B cell (primary cell): ENCODE measurements at regions of chr16 and their contacts with region 1.

Region 1: GRCh38 chr16:70523076-70523742 is at the start of gene COG4:
- DNase-seq: peak; percentile 94
- ATAC-seq: peak; percentile 85
- H3K4me3 ChIP-seq: peak within 1 kb of the TSS; percentile 74 to 100 (median 87)
- H3K4me3 Mint-ChIP-seq: peak within 1 kb of the TSS; percentile 94
- H3K27ac ChIP-seq: peak within 1 kb of the TSS; percentile 85 to 92
- H3K27ac Mint-ChIP-seq: peak within 1 kb of the TSS; percentile 96
- H3K4me1 ChIP-seq: peaks cover 26 to 35% of the 10 kb centered on the region in 2 donors
- H3K4me1 Mint-ChIP-seq: peaks cover 44% of the 10 kb centered on the region
- H3K27me3 ChIP-seq: no peaks in the 10 kb centered on the region
- H3K27me3 Mint-ChIP-seq: no peaks in the 10 kb centered on the region
- CTCF ChIP-seq: no peak
- total RNA-seq, gene COG4: 55.9 and 60.6 TPM in 2 replicates

Region 2: GRCh38 chr16:69839798-69840409 is 683.3 kb before region 1 on chr16:
- CTCF ChIA-PET with region 1: no interaction called
- POLR2A ChIA-PET with region 1: no interaction called
- intact Hi-C with region 1: no loop called
- DNase-seq: no peak
- ATAC-seq: no peak
- H3K4me3 ChIP-seq: no peak overlapping the region
- H3K4me3 Mint-ChIP-seq: no peak overlapping the region
- H3K27ac ChIP-seq: no peak overlapping the region
- H3K27ac Mint-ChIP-seq: no peak overlapping the region
- H3K4me1 ChIP-seq: no peaks in the 10 kb centered on the region
- H3K4me1 Mint-ChIP-seq: no peaks in the 10 kb centered on the region
- H3K27me3 ChIP-seq: no peaks in the 10 kb centered on the region
- H3K27me3 Mint-ChIP-seq: no peaks in the 10 kb centered on the region
- CTCF ChIP-seq: no peak

Region 3: DNA sequence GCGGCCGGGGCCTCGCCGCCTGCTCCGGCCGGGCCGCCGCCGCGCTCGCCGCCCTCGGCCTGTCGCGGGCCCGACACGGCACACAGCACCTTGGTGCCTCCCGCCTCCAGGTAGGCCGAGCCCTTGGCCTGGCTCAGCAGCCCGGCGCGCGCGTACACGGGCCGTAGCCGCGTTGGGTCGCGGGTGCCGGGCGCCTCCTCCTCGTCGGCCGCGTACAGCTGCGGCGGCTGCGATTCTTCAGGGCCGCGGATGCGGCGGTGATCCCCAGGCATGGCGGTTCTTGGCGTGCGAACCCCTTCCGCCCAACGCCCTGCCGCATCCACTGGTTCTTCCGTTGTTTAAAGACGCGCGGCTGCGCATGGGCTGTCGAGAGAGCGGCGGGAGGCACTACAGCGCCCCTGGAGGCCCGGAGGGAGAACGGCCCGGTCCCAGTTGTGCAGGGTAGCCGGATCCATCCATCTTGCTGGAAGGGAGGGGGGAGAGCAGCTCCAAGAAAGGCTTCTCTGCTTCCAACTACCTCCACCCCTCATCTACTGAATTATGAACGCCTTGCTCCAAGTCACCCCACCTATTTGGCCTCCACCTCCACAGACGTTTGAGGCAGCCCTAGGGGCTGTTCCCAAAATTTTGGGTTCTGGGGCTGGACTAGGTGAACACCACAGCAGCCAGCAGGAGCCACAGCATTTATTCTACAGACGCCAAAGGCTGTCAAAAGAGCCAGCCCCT is 271.4 kb before region 1 on chr16 and contains the start of gene EXOSC6:
- CTCF ChIA-PET with region 1: interaction called, 3 read pairs
- POLR2A ChIA-PET with region 1: interaction called, 3 read pairs
- intact Hi-C with region 1: loop called (anchors 1 kb)
- DNase-seq: peak; percentile 96
- ATAC-seq: peak; percentile 97
- H3K4me3 ChIP-seq: peak within 1 kb of the TSS; percentile 19 to 76 (median 65)
- H3K4me3 Mint-ChIP-seq: peak within 1 kb of the TSS; percentile 90
- H3K27ac ChIP-seq: peak within 1 kb of the TSS; percentile 38 to 78
- H3K27ac Mint-ChIP-seq: peak within 1 kb of the TSS; percentile 98
- H3K4me1 ChIP-seq: peaks cover 0 to 24% of the 10 kb centered on the region in 2 donors
- H3K4me1 Mint-ChIP-seq: peaks cover 14% of the 10 kb centered on the region
- H3K27me3 ChIP-seq: no peaks in the 10 kb centered on the region
- H3K27me3 Mint-ChIP-seq: no peaks in the 10 kb centered on the region
- CTCF ChIP-seq: peak; percentile 92
- total RNA-seq, gene EXOSC6: 41.8 and 42.3 TPM in 2 replicates

Region 4: DNA sequence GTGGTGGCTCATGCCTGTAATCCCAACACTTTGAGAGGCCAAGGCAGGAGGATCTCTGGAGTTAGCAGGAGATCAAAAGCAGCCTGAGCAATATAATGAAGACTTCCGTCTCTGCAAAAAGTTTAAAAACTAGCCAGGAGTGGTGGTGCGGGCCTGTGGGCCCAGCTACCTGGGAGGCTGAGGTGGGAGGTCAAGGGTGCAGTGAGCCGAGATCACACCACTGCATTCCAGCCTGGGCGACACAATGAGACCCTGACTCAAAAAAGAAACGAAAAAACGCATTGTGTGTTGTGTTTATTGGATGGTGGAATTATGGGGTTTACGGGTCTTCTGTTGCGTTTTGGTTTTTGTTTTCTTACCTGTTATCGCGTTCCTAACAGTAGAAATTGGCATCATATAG is 177.4 kb before region 1 on chr16:
- CTCF ChIA-PET with region 1: interaction called, 3 read pairs
- POLR2A ChIA-PET with region 1: interaction called, 6 read pairs
- intact Hi-C with region 1: loop called (anchors 1 kb)
- DNase-seq: no peak
- ATAC-seq: no peak
- H3K4me3 ChIP-seq: peak overlapping the region; percentile 19 to 77 (median 71)
- H3K4me3 Mint-ChIP-seq: peak overlapping the region; percentile 79
- H3K27ac ChIP-seq: peak overlapping the region; percentile 94 to 95
- H3K27ac Mint-ChIP-seq: peak overlapping the region; percentile 96
- H3K4me1 ChIP-seq: peaks cover 13 to 19% of the 10 kb centered on the region in 2 donors
- H3K4me1 Mint-ChIP-seq: peaks cover 27% of the 10 kb centered on the region
- H3K27me3 ChIP-seq: no peaks in the 10 kb centered on the region
- H3K27me3 Mint-ChIP-seq: no peaks in the 10 kb centered on the region
- CTCF ChIP-seq: no peak

Region 5: GRCh38 chr16:70428178-70428998 is 94.8 kb before region 1 on chr16:
- CTCF ChIA-PET with region 1: interaction called, 3 read pairs
- POLR2A ChIA-PET with region 1: interaction called, 4 read pairs
- intact Hi-C with region 1: loop called (anchors 2 kb)
- DNase-seq: peak; percentile 40
- ATAC-seq: no peak
- H3K4me3 ChIP-seq: no peak overlapping the region
- H3K4me3 Mint-ChIP-seq: peak overlapping the region; percentile 49
- H3K27ac ChIP-seq: peak overlapping the region; percentile 39 to 63
- H3K27ac Mint-ChIP-seq: peak overlapping the region; percentile 66
- H3K4me1 ChIP-seq: peaks cover 52 to 57% of the 10 kb centered on the region in 2 donors
- H3K4me1 Mint-ChIP-seq: peaks cover 58% of the 10 kb centered on the region
- H3K27me3 ChIP-seq: no peaks in the 10 kb centered on the region
- H3K27me3 Mint-ChIP-seq: no peaks in the 10 kb centered on the region
- CTCF ChIP-seq: no peak

Region 6: DNA sequence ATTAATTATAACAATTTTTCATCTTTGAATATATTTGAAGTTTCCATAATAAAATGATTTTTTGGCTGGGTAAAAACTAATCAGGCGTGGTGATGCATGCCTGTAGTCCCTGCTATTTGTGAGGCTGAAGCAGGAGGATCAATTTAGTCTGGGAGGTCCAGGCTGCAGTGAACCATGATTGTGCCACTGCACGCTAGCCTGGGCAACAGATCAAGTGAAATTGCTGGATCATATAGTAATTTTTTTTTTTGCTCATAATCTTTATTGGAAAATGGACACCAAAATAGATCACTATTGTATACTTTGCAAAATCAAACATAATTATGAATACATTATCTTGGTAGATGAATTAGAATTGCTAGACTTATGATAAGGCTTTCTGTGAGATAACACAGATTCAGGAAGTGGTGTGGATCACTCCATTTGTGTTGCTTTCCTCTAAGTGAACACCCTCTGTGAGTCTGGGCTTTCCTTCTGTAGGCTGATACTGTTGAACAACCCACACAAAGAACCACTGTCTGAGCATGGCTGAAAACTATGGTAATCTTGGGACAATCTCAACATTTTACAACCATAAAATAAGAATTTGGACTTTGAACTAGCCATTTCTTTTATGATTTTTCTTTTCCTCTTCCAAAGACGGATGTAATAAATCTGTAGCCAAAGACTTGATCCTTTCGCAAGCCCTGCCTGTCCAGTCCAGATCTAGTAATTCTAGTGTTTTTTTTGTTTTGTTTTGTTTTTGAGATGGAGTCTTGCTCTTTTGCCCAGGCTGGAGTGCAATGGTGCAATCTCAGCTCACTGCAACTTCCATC is 78.8 kb before region 1 on chr16:
- CTCF ChIA-PET with region 1: no interaction called
- POLR2A ChIA-PET with region 1: interaction called, 10 read pairs
- intact Hi-C with region 1: loop called (anchors 1 kb)
- DNase-seq: no peak
- ATAC-seq: no peak
- H3K4me3 ChIP-seq: no peak overlapping the region
- H3K4me3 Mint-ChIP-seq: no peak overlapping the region
- H3K27ac ChIP-seq: no peak overlapping the region
- H3K27ac Mint-ChIP-seq: no peak overlapping the region
- H3K4me1 ChIP-seq: peaks cover 12 to 16% of the 10 kb centered on the region in 2 donors
- H3K4me1 Mint-ChIP-seq: peaks cover 8% of the 10 kb centered on the region
- H3K27me3 ChIP-seq: no peaks in the 10 kb centered on the region
- H3K27me3 Mint-ChIP-seq: no peaks in the 10 kb centered on the region
- CTCF ChIP-seq: no peak

Region 7: DNA sequence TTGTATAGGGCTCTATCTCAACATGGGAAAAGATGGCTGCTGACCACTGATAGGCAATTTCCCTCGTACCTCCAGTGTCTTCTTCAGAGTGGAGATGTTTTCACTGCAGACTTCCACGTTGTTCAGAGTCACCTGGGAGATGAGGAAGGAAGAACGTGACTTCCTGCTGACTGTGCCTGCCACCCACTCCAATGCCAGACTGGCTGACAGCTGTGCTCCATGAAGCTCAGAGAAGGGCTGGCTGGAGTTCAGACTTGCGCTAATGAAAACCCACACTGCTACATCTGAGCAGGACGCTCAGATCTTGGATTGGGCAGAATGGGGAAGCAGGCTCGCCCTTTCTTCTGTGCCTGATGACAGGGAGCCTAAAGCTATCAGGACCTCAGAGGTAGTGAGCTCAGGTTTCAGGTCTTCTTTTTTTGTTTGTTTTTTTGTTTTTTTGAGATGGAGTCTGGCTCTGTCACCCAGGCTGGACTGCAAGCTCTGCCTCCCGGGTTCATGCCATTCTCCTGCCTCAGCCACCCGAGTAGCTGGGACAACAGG is 32.9 kb before region 1 on chr16:
- CTCF ChIA-PET with region 1: no interaction called
- POLR2A ChIA-PET with region 1: no interaction called
- intact Hi-C with region 1: no loop called
- DNase-seq: no peak
- ATAC-seq: no peak
- H3K4me3 ChIP-seq: no peak overlapping the region
- H3K4me3 Mint-ChIP-seq: no peak overlapping the region
- H3K27ac ChIP-seq: no peak overlapping the region
- H3K27ac Mint-ChIP-seq: no peak overlapping the region
- H3K4me1 ChIP-seq: no peaks in the 10 kb centered on the region
- H3K4me1 Mint-ChIP-seq: no peaks in the 10 kb centered on the region
- H3K27me3 ChIP-seq: no peaks in the 10 kb centered on the region
- H3K27me3 Mint-ChIP-seq: no peaks in the 10 kb centered on the region
- CTCF ChIP-seq: no peak

Region 8: DNA sequence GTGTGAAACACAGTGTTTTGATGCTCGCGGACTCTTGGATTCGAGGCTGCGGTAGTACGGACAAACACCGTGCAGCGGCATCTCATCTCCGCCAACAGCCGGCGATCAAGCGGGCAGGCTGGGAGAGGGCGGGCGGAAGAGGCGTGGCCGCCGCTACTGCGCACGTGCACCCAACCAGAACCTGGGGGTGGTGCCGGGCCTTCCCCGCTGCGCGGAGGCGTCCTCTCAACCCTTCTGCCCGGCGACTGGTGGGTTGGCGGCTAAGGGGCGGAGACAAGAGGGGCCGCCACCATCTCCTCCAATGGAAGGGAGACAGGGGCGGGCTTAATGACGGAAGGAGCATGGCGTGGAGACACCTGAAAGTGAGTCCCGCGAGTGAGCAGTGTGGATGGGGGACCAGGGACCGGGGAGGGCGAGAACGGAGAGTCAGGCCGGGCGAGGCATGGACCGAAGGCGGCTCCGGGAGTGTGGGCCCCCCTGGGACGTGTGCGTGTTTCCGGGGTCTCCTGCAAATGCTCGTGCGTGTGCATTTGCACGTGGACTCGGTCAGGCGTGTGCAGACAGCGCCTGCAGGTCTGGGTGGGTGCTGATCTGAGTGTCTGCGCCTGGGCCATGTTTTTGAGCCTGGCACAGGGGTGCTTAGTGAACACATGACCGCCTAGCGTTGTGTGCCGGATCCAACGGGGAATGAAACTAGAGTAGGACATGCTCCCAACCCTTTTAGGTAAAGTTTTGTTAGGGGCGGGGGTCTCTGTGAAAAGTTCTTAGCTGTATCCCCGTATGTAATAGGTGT is 1485.4 kb after region 1 on chr16 and contains the start of gene DHODH:
- CTCF ChIA-PET with region 1: no interaction called
- POLR2A ChIA-PET with region 1: no interaction called
- intact Hi-C with region 1: loop called (anchors 10 kb)
- DNase-seq: peak; percentile 99
- ATAC-seq: peak; percentile 98
- H3K4me3 ChIP-seq: peak within 1 kb of the TSS; percentile 56 to 96 (median 66)
- H3K4me3 Mint-ChIP-seq: peak within 1 kb of the TSS; percentile 95
- H3K27ac ChIP-seq: peak within 1 kb of the TSS; percentile 73 to 85
- H3K27ac Mint-ChIP-seq: peak within 1 kb of the TSS; percentile 94
- H3K4me1 ChIP-seq: peaks cover 0 to 12% of the 10 kb centered on the region in 2 donors
- H3K4me1 Mint-ChIP-seq: peaks cover 16% of the 10 kb centered on the region
- H3K27me3 ChIP-seq: no peaks in the 10 kb centered on the region
- H3K27me3 Mint-ChIP-seq: peaks cover 4% of the 10 kb centered on the region
- CTCF ChIP-seq: no peak
- total RNA-seq, gene DHODH: 11.3 and 14.7 TPM in 2 replicates